Heart left ventricle (tissue), 16 donors: ENCODE measurements at regions of chr12 and their contacts with region 1.

Region 1: DNA sequence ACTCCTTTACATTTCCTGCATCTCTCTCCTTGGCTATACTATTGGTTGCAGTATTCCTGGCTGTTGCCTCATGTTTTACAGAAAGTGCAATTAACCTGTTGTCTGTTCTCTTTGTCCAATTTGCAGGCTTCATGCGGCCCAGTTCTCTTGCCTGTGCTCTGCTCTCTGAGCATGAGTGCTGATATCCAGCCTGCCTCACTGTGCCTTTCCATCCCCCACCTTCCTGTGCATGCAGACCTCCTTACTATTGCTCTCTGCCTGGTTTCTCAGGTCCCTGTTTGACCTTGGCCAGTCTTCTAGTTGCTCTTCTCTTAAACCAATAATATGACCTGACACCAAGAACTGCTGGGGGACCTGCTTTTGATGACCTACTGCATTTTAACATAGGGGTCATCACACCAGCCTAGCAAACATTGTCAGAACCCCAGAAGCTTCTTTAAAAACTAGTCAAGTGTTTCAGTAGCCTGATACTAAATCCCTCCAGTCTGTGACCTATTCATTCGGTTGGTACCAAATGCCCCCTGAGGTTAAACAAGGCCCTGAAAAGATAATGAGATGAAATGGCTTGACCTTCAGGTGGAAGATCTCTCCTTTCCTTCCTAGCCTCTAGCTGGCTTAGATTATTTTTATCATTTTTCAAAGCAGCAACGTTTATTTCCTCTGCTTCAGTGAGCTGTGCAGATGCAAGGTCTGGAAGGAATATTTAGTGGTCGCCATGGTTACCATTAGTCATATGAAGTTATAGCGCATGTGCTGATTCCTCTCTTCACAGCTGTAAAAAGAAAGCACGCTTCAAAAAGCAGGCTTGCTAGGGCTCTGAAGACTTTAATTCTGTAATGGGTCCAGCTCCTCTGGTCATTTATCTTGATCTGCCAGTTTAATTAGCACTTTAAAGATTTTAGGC is 216.5 kb downstream of the PHLDA1 start:
- DNase-seq: peak in 2 of 5 donors; percentile 34 to 46
- ATAC-seq: peak; percentile 75 to 94 (median 87)
- H3K4me3 ChIP-seq: no peak overlapping the region
- H3K27ac ChIP-seq: peak overlapping the region in 7 of 12 donors; percentile 11 to 60 (median 47)
- H3K4me1 ChIP-seq: peaks cover 0 to 18% (median 12%) of the 10 kb centered on the region in 12 donors
- H3K27me3 ChIP-seq: no peaks in the 10 kb centered on the region
- CTCF ChIP-seq: no peak
- POLR2A ChIP-seq: no peak

Region 2: GRCh38 chr12:75452675-75453330 is 362.3 kb before region 1 on chr12:
- intact Hi-C with region 1: no loop called
- DNase-seq: no peak
- ATAC-seq: no peak
- H3K4me3 ChIP-seq: no peak overlapping the region
- H3K27ac ChIP-seq: no peak overlapping the region
- H3K4me1 ChIP-seq: peaks cover 0 to 26% (median 0%) of the 10 kb centered on the region in 12 donors
- H3K27me3 ChIP-seq: no peaks in the 10 kb centered on the region
- CTCF ChIP-seq: no peak
- POLR2A ChIP-seq: no peak

Region 3: GRCh38 chr12:75635606-75636410 is 179.3 kb before region 1 on chr12:
- intact Hi-C with region 1: loop called in 1 of 10 experiments (anchors 10 kb)
- DNase-seq: no peak
- ATAC-seq: no peak
- H3K4me3 ChIP-seq: no peak overlapping the region
- H3K27ac ChIP-seq: no peak overlapping the region
- H3K4me1 ChIP-seq: peaks cover 0 to 21% (median 0%) of the 10 kb centered on the region in 12 donors
- H3K27me3 ChIP-seq: no peaks in the 10 kb centered on the region
- CTCF ChIP-seq: no peak
- POLR2A ChIP-seq: no peak

Region 4: DNA sequence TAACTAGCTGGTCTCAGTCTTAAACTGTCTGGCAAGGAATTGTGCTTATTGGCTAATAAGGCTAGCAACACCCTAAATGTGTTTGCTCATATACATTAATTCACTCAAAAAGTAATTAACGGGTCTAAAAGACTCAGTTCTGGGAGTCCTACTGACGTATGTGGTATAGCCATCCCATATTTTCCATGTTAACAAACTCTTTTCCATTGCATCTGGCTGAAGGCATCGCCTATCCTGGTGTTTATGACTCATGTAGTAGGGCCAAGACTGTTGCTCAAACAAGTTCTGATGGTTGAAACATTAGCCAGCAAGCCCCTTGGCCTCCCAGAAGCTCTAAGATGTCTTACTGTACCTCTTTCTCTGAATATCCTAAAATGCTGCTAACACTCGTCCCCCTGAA is 118.0 kb after region 1 on chr12:
- intact Hi-C with region 1: no loop called
- DNase-seq: no peak
- ATAC-seq: peak in 1 of 4 donors; percentile 66
- H3K4me3 ChIP-seq: no peak overlapping the region
- H3K27ac ChIP-seq: peak overlapping the region in 1 of 12 donors; percentile 53
- H3K4me1 ChIP-seq: peaks cover 4 to 30% (median 15%) of the 10 kb centered on the region in 12 donors
- H3K27me3 ChIP-seq: peaks cover 0 to 26% (median 0%) of the 10 kb centered on the region in 9 donors
- CTCF ChIP-seq: no peak
- POLR2A ChIP-seq: no peak